PC-9 (cell line): ENCODE measurements at regions of chr5 and their contacts with region 1.

Region 1: GRCh38 chr5:53249529-53250200 is 140.1 kb upstream of the MOCS2 start:
- DNase-seq: peak; percentile 36 to 79
- H3K4me3 ChIP-seq: no peak overlapping the region
- H3K27ac ChIP-seq: peak overlapping the region; percentile 49
- H3K4me1 ChIP-seq: peaks cover 12% of the 10 kb centered on the region
- H3K27me3 ChIP-seq: no peaks in the 10 kb centered on the region
- CTCF ChIP-seq: no peak

Region 2: GRCh38 chr5:53262348-53262970 is 12.8 kb after region 1 on chr5:
- CTCF ChIA-PET with region 1: no interaction called
- POLR2A ChIA-PET with region 1: no interaction called
- intact Hi-C with region 1: no loop called
- DNase-seq: no peak
- H3K4me3 ChIP-seq: no peak overlapping the region
- H3K27ac ChIP-seq: no peak overlapping the region
- H3K4me1 ChIP-seq: no peaks in the 10 kb centered on the region
- H3K27me3 ChIP-seq: no peaks in the 10 kb centered on the region
- CTCF ChIP-seq: peak; percentile 69

Region 3: GRCh38 chr5:53425598-53426511 is 176.2 kb after region 1 on chr5:
- CTCF ChIA-PET with region 1: no interaction called
- POLR2A ChIA-PET with region 1: no interaction called
- intact Hi-C with region 1: loop called (anchors 10 kb)
- DNase-seq: no peak
- H3K4me3 ChIP-seq: no peak overlapping the region
- H3K27ac ChIP-seq: no peak overlapping the region
- H3K4me1 ChIP-seq: 0 out of 2 replicates have a peak, but pooled peaks cover 6% of the 10 kb centered on the region
- H3K27me3 ChIP-seq: no peaks in the 10 kb centered on the region
- CTCF ChIP-seq: peak; percentile 45